Tibial artery (tissue), 4 donors: ENCODE measurements at regions of chr7 and their contacts with region 1.

Region 1: DNA sequence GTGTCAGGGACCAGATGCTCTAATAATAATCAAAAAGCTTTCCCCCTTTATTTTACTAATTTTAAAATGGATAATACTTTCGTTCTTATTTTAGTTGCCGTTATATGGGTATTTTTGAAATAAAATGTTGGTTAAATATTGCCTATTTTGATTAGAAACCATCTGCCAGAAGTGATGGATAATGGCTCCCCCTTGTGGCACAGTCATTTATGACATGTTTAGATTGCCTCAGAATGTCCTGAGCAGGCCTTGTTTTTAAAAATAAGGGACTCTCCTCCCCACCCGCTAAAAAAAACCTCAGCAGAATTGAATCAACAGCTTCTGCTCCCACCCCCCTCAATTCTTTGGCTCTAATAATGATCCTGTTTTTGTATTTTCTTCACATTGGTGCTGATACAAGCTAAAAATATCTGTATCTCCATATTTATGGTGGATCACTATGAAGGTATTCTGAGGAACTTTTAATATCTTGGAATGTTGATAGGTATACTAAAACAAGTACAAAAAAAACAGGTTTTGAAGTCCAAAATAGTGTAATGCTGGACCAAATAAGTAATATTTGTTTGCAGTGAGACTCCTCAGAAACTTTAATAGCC is 38.8 kb downstream of the TMEM60 start:
- DNase-seq: peak in 1 of 2 donors; percentile 66
- H3K4me3 ChIP-seq: no peak overlapping the region
- H3K27ac ChIP-seq: peak overlapping the region in 1 of 2 donors; percentile 13
- H3K4me1 ChIP-seq: peaks cover 0 to 34% (median 9%) of the 10 kb centered on the region in 4 donors
- H3K27me3 ChIP-seq: no peaks in the 10 kb centered on the region
- CTCF ChIP-seq: peak; percentile 78 to 85

Region 2: DNA sequence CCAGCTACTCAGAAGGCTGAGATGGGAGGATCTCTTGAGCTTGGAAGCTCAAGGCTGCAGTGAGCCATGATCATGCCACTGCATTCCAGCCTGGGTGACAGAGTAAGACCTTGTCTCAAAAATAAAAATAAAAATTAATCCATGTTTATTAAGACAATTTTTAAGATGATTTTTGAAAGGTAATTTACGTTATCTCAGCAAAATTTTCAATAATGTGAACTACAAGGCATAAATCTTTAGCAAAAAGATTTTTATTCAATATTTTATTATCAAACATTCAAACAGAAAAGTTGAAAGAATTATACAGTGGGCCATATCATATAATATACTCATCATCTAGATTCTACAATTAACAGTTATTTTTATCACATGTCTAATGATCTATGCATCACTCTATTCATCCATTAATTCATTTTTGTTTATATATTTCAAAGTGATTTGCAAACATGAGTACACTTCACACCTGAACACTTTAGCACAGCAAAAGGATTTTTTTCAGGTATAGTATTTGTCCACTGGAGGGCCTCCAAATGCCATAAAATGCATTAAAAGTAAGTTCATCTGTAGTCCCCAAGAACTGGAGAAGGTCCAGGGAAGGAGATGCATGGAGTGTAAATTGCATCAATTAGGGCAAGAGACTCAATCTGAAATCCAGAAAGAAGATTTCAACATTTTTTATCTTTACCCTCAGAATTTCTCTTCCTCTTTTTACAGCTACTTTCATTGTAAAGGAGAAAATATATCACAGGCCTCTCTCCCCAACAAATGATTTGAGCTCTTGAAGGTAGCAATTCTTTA is 101.8 kb before region 1 on chr7:
- intact Hi-C with region 1: loop called (anchors 5 kb)
- DNase-seq: no peak
- H3K4me3 ChIP-seq: no peak overlapping the region
- H3K27ac ChIP-seq: no peak overlapping the region
- H3K4me1 ChIP-seq: no peaks in the 10 kb centered on the region
- H3K27me3 ChIP-seq: no peaks in the 10 kb centered on the region
- CTCF ChIP-seq: peak; percentile 36 to 38

Region 3: DNA sequence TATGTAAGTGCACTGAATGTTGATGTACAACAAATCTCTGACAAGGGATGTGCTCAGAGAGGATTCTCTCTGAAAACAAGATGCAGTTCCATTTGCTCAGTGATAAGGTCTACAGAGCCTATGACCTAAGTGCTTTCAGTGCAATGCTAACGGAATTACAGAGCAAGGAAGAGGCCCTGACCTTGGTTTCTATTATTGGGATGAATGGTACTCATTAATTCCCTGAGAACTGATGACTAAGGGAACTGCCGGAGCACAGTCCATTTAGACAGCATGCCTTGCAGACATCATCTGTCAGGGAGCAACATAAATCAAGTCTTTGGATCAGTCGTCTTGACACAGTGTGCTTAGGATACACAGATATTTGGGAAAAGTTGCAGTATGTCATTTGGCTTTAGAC is 379.9 kb after region 1 on chr7:
- intact Hi-C with region 1: no loop called
- DNase-seq: no peak
- H3K4me3 ChIP-seq: no peak overlapping the region
- H3K27ac ChIP-seq: no peak overlapping the region
- H3K4me1 ChIP-seq: peaks cover 0 to 13% (median 6%) of the 10 kb centered on the region in 4 donors
- H3K27me3 ChIP-seq: no peaks in the 10 kb centered on the region
- CTCF ChIP-seq: no peak